Vagina (tissue), 2 donors: ENCODE measurements at regions of chr9 and their contacts with region 1.

Region 1: GRCh38 chr9:128552153-128552743 is at the start of gene SPTAN1:
- DNase-seq: peak in 1 of 2 donors; percentile 93
- H3K4me3 ChIP-seq: peak within 1 kb of the TSS; percentile 77 to 95
- H3K27ac ChIP-seq: peak within 1 kb of the TSS; percentile 98
- H3K4me1 ChIP-seq: peaks cover 60% of the 10 kb centered on the region
- H3K27me3 ChIP-seq: no peaks in the 10 kb centered on the region
- CTCF ChIP-seq: no peak
- POLR2A ChIP-seq: peak in 1 of 2 donors; percentile 99
- total RNA-seq, gene SPTAN1: 292 TPM

Region 2: DNA sequence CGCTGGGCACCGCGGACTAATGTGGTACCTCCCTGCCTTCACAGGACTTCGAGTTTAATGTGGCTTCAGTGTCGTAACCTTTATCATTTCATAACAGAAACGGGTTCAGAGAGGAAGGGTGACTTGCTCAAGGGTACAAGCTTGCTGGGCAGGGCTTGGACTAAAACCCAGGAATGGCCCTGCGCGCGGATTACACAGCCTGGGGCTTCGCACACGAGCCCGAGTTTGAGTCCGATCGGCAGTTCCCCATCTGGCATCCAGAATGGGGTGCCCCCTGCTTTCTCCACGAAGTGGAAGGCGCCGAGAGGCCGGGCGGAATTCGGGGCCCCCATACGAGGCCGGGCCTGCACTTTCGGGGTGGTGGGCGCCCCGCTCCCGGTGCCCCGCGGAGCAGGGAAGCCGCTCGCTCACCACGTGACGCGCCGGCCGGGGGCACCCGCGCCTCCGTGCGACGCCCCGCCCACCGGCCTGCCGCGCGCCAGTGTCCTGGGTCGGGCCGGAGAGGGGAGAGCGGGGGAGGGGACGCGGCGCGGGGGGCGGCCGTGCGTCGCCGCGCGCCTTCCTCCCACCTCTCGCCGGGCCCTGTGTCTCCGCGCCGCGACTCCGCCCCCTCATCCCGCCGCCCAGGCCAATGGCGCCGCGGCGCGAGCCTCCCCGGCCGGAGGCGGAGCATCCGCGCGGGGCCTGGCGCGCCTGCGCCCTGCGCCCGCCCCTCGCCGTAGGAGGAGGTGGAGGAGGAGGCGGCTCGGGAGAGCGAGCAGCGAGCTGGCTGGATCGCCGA is 136.5 kb after region 1 on chr9 and contains the start of gene SET:
- intact Hi-C with region 1: loop called (anchors 10 kb)
- DNase-seq: no peak
- H3K4me3 ChIP-seq: peak within 1 kb of the TSS; percentile 79 to 97
- H3K27ac ChIP-seq: peak within 1 kb of the TSS; percentile 97
- H3K4me1 ChIP-seq: peaks cover 42% of the 10 kb centered on the region
- H3K27me3 ChIP-seq: no peaks in the 10 kb centered on the region
- CTCF ChIP-seq: no peak
- POLR2A ChIP-seq: peak; percentile 54 to 99
- total RNA-seq, gene SET: 137 TPM